MCF 10A (cell line): ENCODE measurements at regions of chr1 and their contacts with region 1.

Region 1: GRCh38 chr1:28248283-28249012 is 10.9 kb upstream of the SESN2 start:
- DNase-seq: peak; percentile 84
- H3K4me3 Mint-ChIP-seq: peak overlapping the region; percentile 47
- H3K27ac Mint-ChIP-seq: peak overlapping the region; percentile 84
- H3K4me1 Mint-ChIP-seq: peaks cover 42% of the 10 kb centered on the region
- H3K27me3 Mint-ChIP-seq: no peaks in the 10 kb centered on the region
- CTCF ChIP-seq: peak; percentile 81

Region 2: DNA sequence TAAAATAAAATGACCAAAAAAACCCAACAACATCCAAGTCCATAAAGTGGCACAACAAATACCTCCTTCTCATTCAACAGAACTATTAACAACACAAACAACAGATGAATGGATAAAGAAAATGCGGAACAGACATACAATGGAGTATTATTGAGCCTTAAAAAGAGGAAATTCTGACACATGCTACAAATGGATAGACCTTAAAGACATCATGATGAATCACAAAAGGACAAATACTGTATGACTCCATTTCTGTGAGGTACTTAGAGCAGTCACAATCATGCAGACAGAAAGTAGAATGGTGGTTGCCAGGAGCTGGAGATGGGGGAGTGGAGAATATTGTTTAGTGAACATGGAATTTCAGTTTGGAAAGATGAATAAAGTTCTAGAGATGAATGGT is 202.7 kb before region 1 on chr1:
- CTCF ChIA-PET with region 1: no interaction called
- POLR2A ChIA-PET with region 1: no interaction called
- intact Hi-C with region 1: no loop called
- DNase-seq: no peak
- H3K4me3 Mint-ChIP-seq: no peak overlapping the region
- H3K27ac Mint-ChIP-seq: no peak overlapping the region
- H3K4me1 Mint-ChIP-seq: no peaks in the 10 kb centered on the region
- H3K27me3 Mint-ChIP-seq: no peaks in the 10 kb centered on the region
- CTCF ChIP-seq: no peak

Region 3: GRCh38 chr1:28127617-28128257 is 120.7 kb before region 1 on chr1:
- CTCF ChIA-PET with region 1: no interaction called
- POLR2A ChIA-PET with region 1: no interaction called
- intact Hi-C with region 1: no loop called
- DNase-seq: no peak
- H3K4me3 Mint-ChIP-seq: no peak overlapping the region
- H3K27ac Mint-ChIP-seq: no peak overlapping the region
- H3K4me1 Mint-ChIP-seq: peaks cover 15% of the 10 kb centered on the region
- H3K27me3 Mint-ChIP-seq: no peaks in the 10 kb centered on the region
- CTCF ChIP-seq: no peak

Region 4: GRCh38 chr1:28266920-28267322 is 18.5 kb after region 1 on chr1:
- CTCF ChIA-PET with region 1: interaction called, 19 read pairs
- POLR2A ChIA-PET with region 1: interaction called, 362 read pairs
- intact Hi-C with region 1: no loop called
- DNase-seq: no peak
- H3K4me3 Mint-ChIP-seq: no peak overlapping the region
- H3K27ac Mint-ChIP-seq: no peak overlapping the region
- H3K4me1 Mint-ChIP-seq: peaks cover 43% of the 10 kb centered on the region
- H3K27me3 Mint-ChIP-seq: no peaks in the 10 kb centered on the region
- CTCF ChIP-seq: no peak

Region 5: DNA sequence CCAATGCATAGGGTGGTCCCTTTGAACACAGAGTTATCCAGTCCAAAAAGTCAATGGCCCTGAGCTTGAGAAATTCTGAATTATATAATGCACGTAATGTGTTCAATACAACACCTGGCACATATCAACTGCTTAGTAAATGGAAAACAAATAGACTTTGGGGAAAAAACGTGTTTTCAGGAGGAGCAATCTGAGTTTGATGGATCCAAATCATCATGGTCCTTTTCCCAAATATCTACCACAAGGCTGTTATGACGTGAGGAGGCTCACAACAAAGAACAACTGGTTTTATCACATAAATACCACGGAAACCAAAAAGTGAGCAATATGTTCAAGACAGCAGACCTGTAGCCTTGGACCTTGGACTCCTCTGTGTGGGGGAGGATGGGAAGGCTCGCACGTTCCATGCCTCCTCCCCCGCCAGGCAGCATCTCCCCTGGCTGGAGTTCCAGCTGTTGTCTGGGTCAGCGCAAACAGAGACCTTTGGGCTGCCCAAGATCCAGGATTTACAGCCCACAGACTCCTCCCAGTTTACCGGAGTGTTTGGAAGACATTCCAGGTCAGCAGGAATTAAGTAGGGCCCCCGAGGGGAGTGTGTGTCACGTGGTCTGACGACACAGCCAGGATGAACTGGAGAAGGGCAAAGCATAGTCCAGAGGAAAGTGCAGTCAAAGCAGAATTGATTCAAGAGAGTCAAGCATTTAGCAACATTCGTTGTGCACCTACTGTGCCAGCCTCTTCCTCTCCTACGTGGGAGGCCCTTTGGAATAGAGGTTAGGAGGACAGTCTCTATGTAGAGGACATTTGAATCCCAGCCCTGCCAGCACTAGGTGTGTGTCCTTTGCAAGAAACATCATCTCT is 48.2 kb after region 1 on chr1:
- CTCF ChIA-PET with region 1: interaction called, 14 read pairs
- POLR2A ChIA-PET with region 1: no interaction called
- intact Hi-C with region 1: no loop called
- DNase-seq: no peak
- H3K4me3 Mint-ChIP-seq: no peak overlapping the region
- H3K27ac Mint-ChIP-seq: no peak overlapping the region
- H3K4me1 Mint-ChIP-seq: no peaks in the 10 kb centered on the region
- H3K27me3 Mint-ChIP-seq: no peaks in the 10 kb centered on the region
- CTCF ChIP-seq: no peak

Region 6: DNA sequence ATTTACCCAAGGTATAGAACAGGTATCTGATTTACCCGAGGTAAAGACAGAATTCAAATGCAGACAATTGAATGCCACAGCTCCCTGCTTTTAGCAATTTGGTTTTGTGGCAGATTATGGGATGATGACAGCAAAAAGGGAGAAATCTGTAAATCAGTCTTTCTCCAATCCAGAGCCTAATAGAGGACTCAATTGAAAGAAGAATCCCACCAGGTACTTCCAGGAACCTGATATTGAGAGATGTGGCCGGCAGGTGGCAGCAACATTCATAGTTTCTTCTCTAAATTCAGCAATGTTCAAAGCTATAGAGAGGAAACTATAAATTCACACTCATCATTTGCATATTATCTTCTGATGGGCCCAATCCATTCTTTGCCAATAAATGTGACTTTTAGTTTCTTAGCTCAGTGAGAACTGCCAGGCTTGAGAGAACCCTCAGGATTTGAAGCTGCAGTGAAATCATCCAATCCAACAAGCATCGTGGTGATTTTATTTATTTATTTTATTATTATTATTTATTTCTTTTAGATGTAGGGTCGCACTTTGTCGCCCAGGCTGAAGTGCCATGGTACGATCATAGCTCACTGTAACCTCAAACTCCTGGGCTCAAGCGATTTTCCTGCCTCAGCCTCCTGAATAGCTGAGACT is 111.3 kb after region 1 on chr1:
- CTCF ChIA-PET with region 1: interaction called, 19 read pairs
- POLR2A ChIA-PET with region 1: interaction called, 24 read pairs
- intact Hi-C with region 1: loop called (anchors 2 kb)
- DNase-seq: peak; percentile 64
- H3K4me3 Mint-ChIP-seq: no peak overlapping the region
- H3K27ac Mint-ChIP-seq: no peak overlapping the region
- H3K4me1 Mint-ChIP-seq: no peaks in the 10 kb centered on the region
- H3K27me3 Mint-ChIP-seq: no peaks in the 10 kb centered on the region
- CTCF ChIP-seq: peak; percentile 63

Region 7: DNA sequence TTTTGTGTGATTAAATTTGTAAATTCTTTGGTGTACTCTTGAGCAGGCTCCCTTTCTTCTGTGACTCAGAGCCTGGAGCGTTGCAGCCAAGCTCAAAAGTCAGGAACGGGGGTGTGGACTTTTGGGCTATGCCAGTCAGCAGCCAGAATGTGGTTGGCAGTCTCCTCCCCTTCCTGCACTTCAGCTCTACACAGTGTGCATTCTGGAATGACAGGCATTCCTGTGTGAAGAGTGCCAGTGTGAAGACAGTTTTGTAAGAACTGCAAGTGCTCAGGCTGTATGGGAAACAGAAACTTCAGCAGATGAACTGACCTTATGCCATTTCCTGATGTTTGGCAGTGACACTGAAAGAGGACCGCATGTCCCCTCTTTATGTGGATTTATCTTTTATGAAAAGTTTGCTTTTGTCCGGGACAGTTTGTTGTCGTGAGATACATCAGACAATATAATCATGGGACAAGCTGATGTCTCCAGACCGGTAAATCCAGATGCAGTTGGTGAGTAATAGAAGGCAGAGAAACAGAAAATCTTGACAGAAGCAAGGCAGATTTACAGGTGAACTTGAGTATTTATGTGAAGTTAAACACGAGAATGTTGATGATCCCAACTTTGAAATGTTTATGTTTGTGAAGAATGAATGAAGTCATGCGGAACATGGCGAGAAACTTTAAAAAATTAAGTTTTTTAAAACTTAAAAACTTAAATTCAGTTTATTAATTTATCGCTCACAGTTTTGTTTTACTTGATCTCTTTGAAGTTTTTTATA is 189.7 kb after region 1 on chr1:
- CTCF ChIA-PET with region 1: interaction called, 3 read pairs
- POLR2A ChIA-PET with region 1: interaction called, 21 read pairs
- intact Hi-C with region 1: no loop called
- DNase-seq: peak; percentile 98
- H3K4me3 Mint-ChIP-seq: peak overlapping the region; percentile 89
- H3K27ac Mint-ChIP-seq: peak overlapping the region; percentile 93
- H3K4me1 Mint-ChIP-seq: peaks cover 21% of the 10 kb centered on the region
- H3K27me3 Mint-ChIP-seq: no peaks in the 10 kb centered on the region
- CTCF ChIP-seq: no peak

Region 8: GRCh38 chr1:28581536-28582247 is 333.2 kb after region 1 on chr1:
- CTCF ChIA-PET with region 1: no interaction called
- POLR2A ChIA-PET with region 1: interaction called, 42 read pairs
- intact Hi-C with region 1: no loop called
- DNase-seq: peak; percentile 93
- H3K4me3 Mint-ChIP-seq: peak overlapping the region; percentile 91
- H3K27ac Mint-ChIP-seq: peak overlapping the region; percentile 92
- H3K4me1 Mint-ChIP-seq: peaks cover 15% of the 10 kb centered on the region
- H3K27me3 Mint-ChIP-seq: no peaks in the 10 kb centered on the region
- CTCF ChIP-seq: no peak